HEK293 (cell line): ENCODE measurements at regions of chr1 and their contacts with region 1.

Region 1: GRCh38 chr1:22039594-22040285 is 12.8 kb upstream of the CDC42 start:
- H3K4me3 ChIP-seq: no peak overlapping the region
- H3K27ac ChIP-seq: no peak overlapping the region
- H3K4me1 ChIP-seq: no peaks in the 10 kb centered on the region; the same call in 1 of the 2 replicates
- CTCF ChIP-seq: 0 out of 2 replicates have a peak, but pooled peaks have one; percentile 19

Region 2: DNA sequence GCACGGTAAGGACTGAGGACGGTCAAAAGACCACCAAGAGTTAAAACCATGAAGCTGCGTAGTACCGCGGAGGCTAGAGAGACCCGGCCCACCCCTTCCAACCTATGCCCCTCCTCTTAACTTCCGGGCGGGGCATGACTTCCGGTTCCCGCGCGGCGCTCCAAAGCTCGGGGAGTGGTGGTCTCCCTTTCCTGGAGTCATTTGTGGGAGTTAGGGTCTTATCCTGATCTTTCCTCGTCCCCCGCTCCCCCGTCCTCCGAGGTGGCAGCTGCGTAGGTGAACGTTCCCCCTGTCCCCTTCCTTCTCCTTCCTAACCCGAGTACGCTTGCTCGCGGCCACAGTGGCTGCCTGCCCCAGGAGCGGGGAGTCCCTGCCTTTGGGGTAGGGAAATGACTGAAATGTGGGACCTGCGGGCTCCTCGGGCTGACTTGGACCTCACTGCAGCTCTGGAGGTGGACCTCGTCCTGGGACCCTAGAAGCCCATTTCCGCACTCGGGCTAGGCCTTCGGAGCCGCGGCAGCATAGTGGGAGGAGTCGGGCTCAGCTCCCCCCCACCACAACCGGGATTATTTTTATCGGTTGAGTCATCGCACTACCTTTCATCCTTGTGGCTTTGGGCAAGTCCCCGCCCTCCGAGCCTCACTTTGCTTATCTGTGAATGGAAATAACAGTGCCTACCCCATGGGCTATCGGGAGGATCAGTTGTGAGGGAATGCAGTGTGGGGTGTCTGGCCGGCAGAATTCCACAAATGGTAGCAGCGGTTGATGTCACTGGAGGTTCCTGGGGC is 14.2 kb before region 1 on chr1:
- CTCF ChIA-PET with region 1: no interaction called
- POLR2A ChIA-PET with region 1: interaction called, 10 read pairs
- H3K4me3 ChIP-seq: peak overlapping the region; percentile 98
- H3K27ac ChIP-seq: peak overlapping the region; percentile 91
- H3K4me1 ChIP-seq: no peaks in the 10 kb centered on the region
- CTCF ChIP-seq: no peak

Region 3: DNA sequence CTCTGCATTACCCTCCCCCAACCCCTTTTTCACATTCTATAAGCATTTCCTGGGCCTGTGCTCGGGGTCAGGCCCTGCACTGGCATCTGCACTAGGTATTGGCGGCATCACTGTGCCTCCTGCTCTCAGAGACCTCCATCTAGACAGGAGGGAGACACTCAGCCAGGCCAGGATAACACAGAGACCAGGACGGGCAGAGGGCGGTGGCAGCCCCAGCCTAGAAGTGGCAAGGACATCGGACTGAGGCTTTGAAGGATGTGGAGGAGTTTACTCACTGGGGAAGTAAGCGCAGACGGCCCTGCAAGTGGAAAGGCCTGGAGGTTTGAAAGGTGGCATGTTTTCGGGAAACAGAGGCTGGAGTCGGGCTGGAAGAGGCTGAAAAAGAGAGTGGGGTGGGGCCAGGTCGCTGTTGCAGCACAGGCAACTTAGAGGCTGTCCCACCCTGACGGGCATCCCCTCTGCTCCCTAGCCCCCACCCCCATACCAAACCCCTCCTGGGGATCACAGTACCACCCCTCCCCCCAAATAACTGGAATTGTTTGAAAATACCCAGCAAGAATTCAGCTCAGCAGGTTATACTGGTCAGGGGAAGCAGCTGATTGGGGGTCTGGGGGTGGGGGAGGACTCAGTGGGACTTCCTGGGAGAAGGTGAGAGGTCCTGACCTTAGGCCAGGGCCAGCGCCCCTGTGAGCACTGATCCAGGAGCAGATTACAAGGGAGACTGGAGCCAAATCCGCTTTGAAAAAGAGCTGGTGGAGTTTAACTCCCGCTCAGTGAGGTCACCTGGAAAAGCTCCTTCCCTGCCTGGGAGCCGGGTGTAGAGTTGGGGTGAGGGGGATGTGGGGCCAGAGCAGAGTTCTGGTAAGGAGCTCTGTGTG is 225.0 kb after region 1 on chr1:
- CTCF ChIA-PET with region 1: no interaction called
- POLR2A ChIA-PET with region 1: no interaction called
- H3K4me3 ChIP-seq: no peak overlapping the region
- H3K27ac ChIP-seq: no peak overlapping the region
- H3K4me1 ChIP-seq: no peaks in the 10 kb centered on the region
- CTCF ChIP-seq: no peak